Caco-2 (cell line): ENCODE measurements at regions of chr3 and their contacts with region 1.

Region 1: GRCh38 chr3:126883241-126883640 is 99.7 kb upstream of the PLXNA1 start:
- DNase-seq: no peak
- H3K4me3 ChIP-seq: no peak overlapping the region
- H3K4me3 Mint-ChIP-seq: no peak overlapping the region
- H3K27ac Mint-ChIP-seq: peak overlapping the region; percentile 91
- H3K4me1 ChIP-seq: peaks cover 58% of the 10 kb centered on the region
- H3K4me1 Mint-ChIP-seq: peaks cover 48% of the 10 kb centered on the region
- H3K27me3 ChIP-seq: no peaks in the 10 kb centered on the region
- H3K27me3 Mint-ChIP-seq: no peaks in the 10 kb centered on the region
- CTCF ChIP-seq: no peak

Region 2: GRCh38 chr3:126630020-126630419 is 253.2 kb before region 1 on chr3:
- CTCF ChIA-PET with region 1: no interaction called
- POLR2A ChIA-PET with region 1: no interaction called
- intact Hi-C with region 1: no loop called
- DNase-seq: no peak
- H3K4me3 ChIP-seq: no peak overlapping the region
- H3K4me3 Mint-ChIP-seq: no peak overlapping the region
- H3K27ac Mint-ChIP-seq: no peak overlapping the region
- H3K4me1 ChIP-seq: no peaks in the 10 kb centered on the region
- H3K4me1 Mint-ChIP-seq: no peaks in the 10 kb centered on the region
- H3K27me3 ChIP-seq: no peaks in the 10 kb centered on the region
- H3K27me3 Mint-ChIP-seq: no peaks in the 10 kb centered on the region
- CTCF ChIP-seq: no peak

Region 3: DNA sequence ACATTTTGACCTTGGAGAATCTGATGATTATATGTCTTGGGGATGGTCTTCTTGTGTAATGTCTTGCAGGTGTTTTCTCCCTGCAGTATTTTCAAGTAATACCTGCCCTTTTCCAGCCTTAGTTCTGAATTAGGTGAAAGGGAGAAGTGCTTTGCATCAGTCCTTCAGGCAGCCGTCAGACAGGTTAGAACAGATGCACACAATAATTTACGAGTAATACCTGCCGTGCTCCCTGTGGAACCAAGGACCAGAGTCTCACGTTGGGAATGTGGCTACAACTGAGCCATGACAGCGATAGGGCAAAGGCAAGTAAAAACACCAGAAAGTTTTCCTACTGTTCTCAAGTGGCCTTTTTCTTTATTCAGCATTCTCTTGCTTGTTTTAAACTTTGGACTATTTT is 110.1 kb before region 1 on chr3:
- CTCF ChIA-PET with region 1: no interaction called
- POLR2A ChIA-PET with region 1: interaction called, 11 read pairs
- intact Hi-C with region 1: no loop called
- DNase-seq: no peak
- H3K4me3 ChIP-seq: no peak overlapping the region
- H3K4me3 Mint-ChIP-seq: no peak overlapping the region
- H3K27ac Mint-ChIP-seq: no peak overlapping the region
- H3K4me1 ChIP-seq: 0 out of 2 replicates have a peak, but pooled peaks cover 3% of the 10 kb centered on the region
- H3K4me1 Mint-ChIP-seq: peaks cover 21% of the 10 kb centered on the region
- H3K27me3 ChIP-seq: no peaks in the 10 kb centered on the region
- H3K27me3 Mint-ChIP-seq: no peaks in the 10 kb centered on the region
- CTCF ChIP-seq: no peak

Region 4: DNA sequence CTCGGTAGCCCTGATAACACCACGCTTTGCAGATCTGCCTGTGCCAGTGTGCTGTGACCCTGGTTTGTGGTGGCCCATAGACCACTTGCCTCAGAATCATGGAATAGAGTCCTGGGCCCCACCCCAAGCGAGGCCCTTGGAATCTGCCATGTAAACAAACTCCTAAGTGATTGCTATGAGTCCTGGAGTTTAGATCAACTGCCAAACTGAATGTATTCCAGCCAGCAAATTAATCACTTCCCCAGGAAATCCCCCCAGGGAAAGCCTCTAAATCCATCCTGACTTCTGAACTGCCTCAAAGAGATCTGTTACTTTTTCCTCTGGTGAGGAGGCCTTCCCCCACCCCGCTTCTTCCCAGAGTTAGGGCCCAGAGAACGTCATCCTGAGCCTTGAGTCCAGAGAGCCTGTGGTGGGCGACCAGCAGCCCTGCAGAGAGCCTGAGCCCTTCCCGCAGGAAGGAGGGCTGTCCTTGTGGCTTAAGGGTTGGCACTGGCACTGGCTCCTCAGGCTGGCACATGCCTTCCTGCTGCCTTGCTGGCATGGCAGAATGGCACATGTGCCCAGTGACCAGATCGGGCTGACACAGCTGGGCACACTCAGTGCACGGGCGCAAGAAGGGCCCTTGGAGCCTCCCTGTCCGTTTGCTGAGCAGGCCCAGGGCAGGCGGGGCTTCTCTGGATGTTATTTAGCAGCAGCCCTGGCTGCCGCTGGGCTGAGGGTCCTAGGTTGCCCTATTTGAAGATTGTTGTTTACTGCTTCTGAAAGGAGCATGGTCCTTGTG is 49.1 kb after region 1 on chr3:
- CTCF ChIA-PET with region 1: no interaction called
- POLR2A ChIA-PET with region 1: no interaction called
- intact Hi-C with region 1: loop called (anchors 5 kb)
- DNase-seq: no peak
- H3K4me3 ChIP-seq: no peak overlapping the region
- H3K4me3 Mint-ChIP-seq: no peak overlapping the region
- H3K27ac Mint-ChIP-seq: no peak overlapping the region
- H3K4me1 ChIP-seq: peaks cover 35% of the 10 kb centered on the region
- H3K4me1 Mint-ChIP-seq: peaks cover 43% of the 10 kb centered on the region
- H3K27me3 ChIP-seq: no peaks in the 10 kb centered on the region
- H3K27me3 Mint-ChIP-seq: no peaks in the 10 kb centered on the region
- CTCF ChIP-seq: no peak